Psoas muscle (tissue), 8 donors: ENCODE measurements at regions of chr2 and their contacts with region 1.

Region 1: GRCh38 chr2:96760036-96760985 is at the start of gene CNNM4:
- DNase-seq: peak; percentile 95 to 97
- ATAC-seq: peak; percentile 93 to 96 (median 94)
- H3K4me3 ChIP-seq: peak within 1 kb of the TSS; percentile 70
- H3K27ac ChIP-seq: peak within 1 kb of the TSS; percentile 76
- H3K4me1 ChIP-seq: peaks cover 34% of the 10 kb centered on the region
- H3K27me3 ChIP-seq: no peaks in the 10 kb centered on the region
- CTCF ChIP-seq: no peak
- total RNA-seq, gene CNNM4: 9.9 to 28.8 (median 14.3) TPM

Region 2: GRCh38 chr2:96801005-96801785 is 40.9 kb after region 1 on chr2:
- intact Hi-C with region 1: loop called (anchors 2 to 5 kb)
- DNase-seq: peak; percentile 77 to 92
- ATAC-seq: peak; percentile 97 to 99 (median 98)
- H3K4me3 ChIP-seq: no peak overlapping the region
- H3K27ac ChIP-seq: peak overlapping the region; percentile 80
- H3K4me1 ChIP-seq: peaks cover 8% of the 10 kb centered on the region
- H3K27me3 ChIP-seq: no peaks in the 10 kb centered on the region
- CTCF ChIP-seq: peak; percentile 84